ENCODE measurements at regions of chr3 and their contacts with region 1.

Region 1: GRCh38 chr3:141000027-141000663 is 51.0 kb upstream of the SPSB4 start:
- DNase-seq: peak; percentile 69
- ATAC-seq: peak; percentile 92
- H3K4me3 Mint-ChIP-seq: no peak overlapping the region
- H3K27ac Mint-ChIP-seq: no peak overlapping the region
- H3K4me1 Mint-ChIP-seq: peaks cover 7% of the 10 kb centered on the region
- H3K27me3 Mint-ChIP-seq: peaks cover 9% of the 10 kb centered on the region

Region 2: DNA sequence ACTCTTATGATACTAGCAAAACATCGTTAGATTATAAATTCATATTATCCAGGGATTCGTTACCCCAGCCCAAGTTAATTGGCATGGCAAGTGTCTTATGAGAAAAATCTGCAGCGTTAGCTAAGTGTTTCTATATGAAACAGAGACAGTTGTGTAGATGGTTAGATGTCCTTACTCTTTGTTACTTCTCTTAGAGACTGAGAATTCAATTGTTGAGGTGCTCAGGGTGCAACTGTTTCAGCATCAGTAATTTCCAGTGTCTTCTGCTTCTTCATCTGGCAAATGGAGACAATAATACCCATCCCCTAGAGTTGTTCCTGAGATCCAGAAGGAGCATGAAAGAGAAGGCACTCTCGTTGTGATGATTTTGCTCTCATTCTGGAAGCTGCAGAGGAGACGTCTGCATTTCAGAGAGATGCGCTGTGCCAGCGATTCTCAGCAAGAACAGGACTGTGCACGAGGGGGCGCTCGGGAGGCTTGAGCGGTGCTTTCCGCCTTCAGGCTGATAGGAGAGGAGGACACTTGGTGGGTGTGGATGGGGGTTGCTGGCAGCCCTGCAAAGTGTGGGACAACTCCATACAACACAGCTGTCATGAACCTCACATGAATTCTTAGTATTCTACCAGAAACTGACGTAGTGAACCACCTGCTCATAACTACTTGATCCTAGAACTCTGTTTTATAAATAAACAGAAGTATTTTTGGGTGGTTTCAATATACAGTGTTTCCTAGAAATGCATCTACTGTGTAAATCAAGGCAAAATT is 11.3 kb after region 1 on chr3:
- CTCF ChIA-PET with region 1: interaction called, 57 read pairs
- POLR2A ChIA-PET with region 1: no interaction called
- DNase-seq: peak; percentile 87
- ATAC-seq: peak; percentile 99
- H3K4me3 Mint-ChIP-seq: no peak overlapping the region
- H3K27ac Mint-ChIP-seq: no peak overlapping the region
- H3K4me1 Mint-ChIP-seq: peaks cover 12% of the 10 kb centered on the region
- H3K27me3 Mint-ChIP-seq: peaks cover 24% of the 10 kb centered on the region

Region 3: GRCh38 chr3:141050576-141051442 is 50.7 kb after region 1 on chr3 and contains the start of gene SPSB4:
- CTCF ChIA-PET with region 1: interaction called, 10 read pairs
- POLR2A ChIA-PET with region 1: no interaction called
- DNase-seq: peak; percentile 47
- ATAC-seq: peak; percentile 70
- H3K4me3 Mint-ChIP-seq: peak within 1 kb of the TSS; percentile 67
- H3K27ac Mint-ChIP-seq: no peak within 1 kb of the TSS
- H3K4me1 Mint-ChIP-seq: peaks cover 18% of the 10 kb centered on the region
- H3K27me3 Mint-ChIP-seq: peaks cover 65% of the 10 kb centered on the region
- total RNA-seq, gene SPSB4: not detected

Region 4: DNA sequence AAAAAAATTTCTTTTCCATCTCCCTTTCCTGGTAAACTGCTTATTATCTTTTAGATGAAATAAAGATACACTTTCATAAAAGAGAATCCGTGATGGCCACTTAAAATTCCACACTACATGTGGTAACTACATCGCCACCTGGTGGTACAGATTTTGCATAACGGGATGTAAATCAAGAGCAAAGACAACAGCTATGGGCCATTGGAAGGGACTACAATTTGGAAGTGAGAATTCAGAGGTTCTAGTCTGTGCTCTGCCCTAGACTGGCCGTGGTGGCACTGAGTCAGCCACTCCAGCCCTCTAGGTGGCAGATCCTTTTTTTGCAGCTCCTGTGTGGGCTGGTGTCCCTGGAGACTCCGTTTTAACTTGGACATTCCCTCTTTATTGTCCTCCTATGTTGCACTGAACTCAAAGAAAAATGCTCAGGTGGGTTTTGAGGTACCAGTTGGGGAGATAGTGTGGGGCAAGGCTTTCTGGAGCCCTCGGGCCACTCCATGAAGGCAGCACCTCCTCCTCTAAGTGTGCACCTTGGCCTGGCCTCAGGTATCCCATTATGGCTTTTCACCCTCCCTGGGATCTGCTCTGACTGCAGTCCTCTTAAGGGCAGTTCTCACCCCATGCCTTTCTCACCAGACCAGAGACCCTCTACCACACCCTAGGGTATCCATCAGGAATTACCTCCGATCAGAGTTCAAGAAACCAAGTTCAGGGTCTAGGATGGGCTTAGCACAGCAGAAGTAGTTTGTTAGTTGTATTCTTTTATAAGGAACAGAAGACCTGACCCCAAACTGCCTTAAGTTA is 105.9 kb after region 1 on chr3:
- CTCF ChIA-PET with region 1: interaction called, 45 read pairs
- POLR2A ChIA-PET with region 1: no interaction called
- DNase-seq: peak; percentile 80
- ATAC-seq: peak; percentile 61
- H3K4me3 Mint-ChIP-seq: no peak overlapping the region
- H3K27ac Mint-ChIP-seq: no peak overlapping the region
- H3K4me1 Mint-ChIP-seq: no peaks in the 10 kb centered on the region
- H3K27me3 Mint-ChIP-seq: peaks cover 3% of the 10 kb centered on the region

Region 5: GRCh38 chr3:141114816-141115460 is 114.8 kb after region 1 on chr3:
- CTCF ChIA-PET with region 1: interaction called, 11 read pairs
- POLR2A ChIA-PET with region 1: no interaction called
- DNase-seq: no peak
- ATAC-seq: no peak
- H3K4me3 Mint-ChIP-seq: no peak overlapping the region
- H3K27ac Mint-ChIP-seq: no peak overlapping the region
- H3K4me1 Mint-ChIP-seq: no peaks in the 10 kb centered on the region
- H3K27me3 Mint-ChIP-seq: peaks cover 10% of the 10 kb centered on the region

Measured in activated CD8-positive, alpha-beta T cell treated with anti-CD3 and anti-CD28 coated beads, Interleukin-2, amount 10 ng/mL, durations not matched to agents 7 days and 5 days (primary cell).